ENCODE measurements at regions of chr15 and their contacts with region 1.

Region 1: GRCh38 chr15:92917606-92918407 is 17.7 kb downstream of the CHD2 start:
- DNase-seq: peak; percentile 93
- H3K4me3 ChIP-seq: peak overlapping the region; percentile 43
- H3K27ac ChIP-seq: peak overlapping the region; percentile 86
- H3K4me1 ChIP-seq: peaks cover 98% of the 10 kb centered on the region
- H3K27me3 ChIP-seq: no peaks in the 10 kb centered on the region
- CTCF ChIP-seq: peak; percentile 91

Region 2: DNA sequence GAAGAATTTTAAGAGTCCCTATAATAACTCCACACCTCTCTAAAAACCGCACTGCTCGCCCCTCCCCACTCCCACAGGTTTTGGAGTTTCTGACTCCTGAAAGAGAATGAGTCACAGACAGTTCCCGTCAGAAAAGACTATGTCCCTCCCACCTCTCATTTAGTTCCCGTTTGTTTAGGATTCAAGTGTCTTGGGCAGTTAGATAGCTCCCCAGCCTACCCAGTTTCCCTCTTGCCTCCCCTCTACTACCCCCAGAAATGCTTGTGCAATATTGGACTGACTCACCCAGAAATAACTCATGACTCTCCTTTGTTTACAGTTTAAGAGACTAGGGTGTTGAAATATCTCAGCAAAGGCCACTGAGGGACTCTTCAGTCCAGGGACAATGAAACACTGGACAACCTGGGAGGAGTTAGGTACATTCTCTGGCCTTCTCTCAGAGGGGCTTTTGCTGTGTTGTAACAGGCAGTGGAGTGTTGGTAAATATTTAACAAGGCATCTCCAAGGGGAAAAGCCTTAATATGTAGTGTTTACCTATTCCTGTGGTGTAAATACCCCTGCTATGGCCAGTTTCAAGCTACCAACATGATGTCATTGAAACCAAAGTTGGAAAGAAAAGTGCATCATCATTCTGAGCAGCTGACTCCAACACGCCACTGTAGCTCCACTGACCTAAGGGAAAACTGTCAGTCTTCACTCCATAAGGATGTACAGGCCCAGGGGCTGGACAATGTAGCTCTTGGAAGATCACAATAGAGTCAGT is 113.8 kb before region 1 on chr15:
- intact Hi-C with region 1: loop called (anchors 5 kb)
- DNase-seq: peak; percentile 52
- H3K4me3 ChIP-seq: no peak overlapping the region
- H3K27ac ChIP-seq: peak overlapping the region; percentile 81
- H3K4me1 ChIP-seq: peaks cover 37% of the 10 kb centered on the region
- H3K27me3 ChIP-seq: no peaks in the 10 kb centered on the region
- CTCF ChIP-seq: no peak

Region 3: DNA sequence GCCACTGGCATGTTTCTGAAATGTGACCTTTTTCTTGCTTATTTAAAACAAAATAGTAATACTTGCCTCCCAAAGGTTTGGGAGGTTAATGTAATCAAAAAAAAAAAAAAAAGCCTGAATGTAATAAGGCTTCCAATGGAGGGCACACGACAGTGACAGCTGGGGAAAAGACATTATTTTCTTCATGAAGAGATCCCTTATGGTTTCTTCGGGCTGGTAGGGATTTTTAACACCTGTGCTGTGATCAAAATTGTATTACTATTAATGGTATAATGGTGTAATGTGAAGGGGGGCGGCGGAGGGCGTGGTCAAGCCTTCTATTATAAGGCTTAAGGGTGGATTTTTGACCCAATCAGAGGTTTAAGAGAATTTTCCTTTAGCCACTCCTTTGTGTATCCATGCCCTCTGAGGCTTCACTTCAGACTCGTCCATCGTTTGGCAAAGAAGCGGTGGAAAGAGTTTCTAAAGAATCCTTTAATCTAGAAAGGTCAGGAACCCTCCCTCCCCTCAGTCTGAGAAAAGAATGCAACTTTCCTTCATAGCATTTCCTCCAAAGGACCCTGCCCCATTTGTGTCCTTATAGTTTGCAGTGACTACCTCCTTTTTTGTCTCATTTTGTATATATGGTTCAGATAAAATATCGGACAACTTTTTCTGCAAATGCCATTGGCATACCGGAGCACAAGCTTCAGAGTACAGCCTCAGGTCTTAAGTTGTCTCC is 107.2 kb before region 1 on chr15:
- intact Hi-C with region 1: loop called (anchors 5 kb)
- DNase-seq: peak; percentile 83
- H3K4me3 ChIP-seq: peak overlapping the region; percentile 75
- H3K27ac ChIP-seq: peak overlapping the region; percentile 100
- H3K4me1 ChIP-seq: peaks cover 36% of the 10 kb centered on the region
- H3K27me3 ChIP-seq: no peaks in the 10 kb centered on the region
- CTCF ChIP-seq: no peak

Region 4: DNA sequence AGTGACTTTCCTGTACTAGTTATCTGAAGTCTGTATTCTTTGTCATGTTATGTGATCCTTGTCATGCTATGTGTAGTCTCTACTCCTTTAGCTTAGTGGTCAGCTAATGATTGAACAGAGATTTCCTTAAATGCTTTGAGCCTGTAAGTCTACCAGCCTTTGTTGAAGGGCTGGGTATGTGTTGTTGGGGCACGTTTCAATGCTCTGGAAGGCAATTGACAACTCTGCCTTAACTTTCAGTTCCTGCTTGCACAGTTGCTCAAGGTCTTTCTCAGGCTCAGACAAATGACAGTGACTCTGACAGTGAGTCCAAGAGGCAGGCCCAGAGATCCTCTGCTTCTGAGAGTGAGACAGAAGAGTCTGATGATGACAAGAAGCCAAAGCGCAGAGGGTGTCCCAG is 71.7 kb after region 1 on chr15:
- intact Hi-C with region 1: no loop called
- DNase-seq: no peak
- H3K4me3 ChIP-seq: no peak overlapping the region
- H3K27ac ChIP-seq: no peak overlapping the region
- H3K4me1 ChIP-seq: peaks cover 12% of the 10 kb centered on the region
- H3K27me3 ChIP-seq: no peaks in the 10 kb centered on the region
- CTCF ChIP-seq: no peak